Activated CD4-positive, alpha-beta T cell treated with anti-CD3 and anti-CD28 coated beads, Interleukin-2, amount 10 ng/mL, durations not matched to agents 24 days and 14 days (primary cell): ENCODE measurements at regions of chr4 and their contacts with region 1.

Region 1: DNA sequence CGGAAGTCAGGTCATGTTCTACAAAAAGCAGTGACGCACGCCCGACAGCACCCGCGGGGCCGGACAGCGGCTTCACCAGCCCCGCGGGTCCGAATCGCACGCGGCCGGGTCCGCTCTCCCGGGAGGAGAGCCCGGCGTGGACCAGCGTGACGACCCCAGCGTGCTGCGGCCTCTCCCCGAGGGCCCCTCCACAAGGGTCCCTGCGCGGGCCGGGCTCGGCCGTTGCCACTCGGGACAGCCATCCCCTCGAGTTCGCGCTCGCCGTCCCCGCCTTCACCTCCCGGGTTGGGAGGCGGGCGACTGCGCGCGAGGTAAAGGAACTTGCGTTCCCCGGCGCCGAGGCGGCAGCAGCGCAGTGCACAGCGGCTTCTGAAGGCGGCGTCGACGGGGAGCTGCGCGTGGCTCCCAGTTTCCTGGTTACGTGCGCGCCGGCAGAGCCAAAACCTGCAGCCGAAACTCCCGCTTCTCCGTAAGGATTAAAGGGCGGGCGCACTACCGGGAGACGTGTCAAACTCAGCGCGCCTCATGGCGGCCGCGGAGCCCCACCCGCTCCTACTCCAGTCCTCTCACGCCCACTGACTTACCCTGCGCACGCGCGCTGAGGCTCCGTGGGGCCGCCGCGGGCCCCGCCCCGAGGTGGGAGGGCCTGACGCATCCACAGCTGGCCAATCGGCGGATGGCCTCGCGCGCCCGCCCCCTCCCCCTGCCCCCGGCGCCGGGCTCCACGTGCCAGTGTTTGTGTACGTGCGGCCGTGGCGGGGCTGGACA is 416 bp upstream of the LRP2BP start:
- DNase-seq: peak; percentile 100
- H3K4me3 Mint-ChIP-seq: peak overlapping the region; percentile 87
- H3K27ac Mint-ChIP-seq: peak overlapping the region; percentile 96
- H3K4me1 Mint-ChIP-seq: peaks cover 48% of the 10 kb centered on the region
- H3K27me3 Mint-ChIP-seq: no peaks in the 10 kb centered on the region

Region 2: DNA sequence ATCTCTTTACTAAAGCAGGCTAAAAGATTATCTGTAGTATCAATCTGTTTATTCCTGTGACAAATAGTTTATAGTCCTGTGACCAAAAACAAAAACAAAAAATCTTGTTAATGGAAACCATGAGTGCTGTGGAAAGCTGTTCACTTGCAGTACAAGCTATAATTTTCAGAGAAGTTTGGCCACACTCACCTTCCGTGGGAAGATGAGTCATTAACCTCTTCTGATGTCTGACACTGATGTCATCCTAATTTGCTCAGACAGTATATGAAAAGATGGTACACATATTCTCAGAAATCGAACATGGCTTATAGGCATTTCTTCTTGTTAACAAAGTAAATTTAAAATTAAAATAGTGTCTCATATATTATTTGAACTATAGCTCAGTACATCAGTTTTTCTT is 1158.5 kb before region 1 on chr4:
- intact Hi-C with region 1: loop called (anchors 10 kb)
- DNase-seq: peak; percentile 87
- H3K4me3 Mint-ChIP-seq: peak overlapping the region; percentile 68
- H3K27ac Mint-ChIP-seq: peak overlapping the region; percentile 94
- H3K4me1 Mint-ChIP-seq: peaks cover 51% of the 10 kb centered on the region
- H3K27me3 Mint-ChIP-seq: no peaks in the 10 kb centered on the region

Region 3: GRCh38 chr4:185142912-185143595 is 253.1 kb before region 1 on chr4 and contains the start of gene SLC25A4:
- intact Hi-C with region 1: loop called (anchors 5 kb)
- DNase-seq: peak; percentile 89
- H3K4me3 Mint-ChIP-seq: peak within 1 kb of the TSS; percentile 86
- H3K27ac Mint-ChIP-seq: peak within 1 kb of the TSS; percentile 65
- H3K4me1 Mint-ChIP-seq: peaks cover 7% of the 10 kb centered on the region
- H3K27me3 Mint-ChIP-seq: peaks cover 65% of the 10 kb centered on the region
- total RNA-seq, gene SLC25A4: 1.7 and 1.9 TPM in 2 replicates

Region 4: GRCh38 chr4:185209031-185209851 is 186.9 kb before region 1 on chr4 and contains the start of gene SNX25:
- intact Hi-C with region 1: loop called (anchors 1 kb)
- DNase-seq: peak; percentile 97
- H3K4me3 Mint-ChIP-seq: peak within 1 kb of the TSS; percentile 94
- H3K27ac Mint-ChIP-seq: peak within 1 kb of the TSS; percentile 83
- H3K4me1 Mint-ChIP-seq: peaks cover 48% of the 10 kb centered on the region
- H3K27me3 Mint-ChIP-seq: peaks cover 3% of the 10 kb centered on the region
- total RNA-seq, gene SNX25: 27.0 and 27.3 TPM in 2 replicates

Region 5: GRCh38 chr4:185286571-185286970 is 109.6 kb before region 1 on chr4:
- intact Hi-C with region 1: no loop called
- DNase-seq: no peak
- H3K4me3 Mint-ChIP-seq: no peak overlapping the region
- H3K27ac Mint-ChIP-seq: no peak overlapping the region
- H3K4me1 Mint-ChIP-seq: peaks cover 5% of the 10 kb centered on the region
- H3K27me3 Mint-ChIP-seq: no peaks in the 10 kb centered on the region

Region 6: DNA sequence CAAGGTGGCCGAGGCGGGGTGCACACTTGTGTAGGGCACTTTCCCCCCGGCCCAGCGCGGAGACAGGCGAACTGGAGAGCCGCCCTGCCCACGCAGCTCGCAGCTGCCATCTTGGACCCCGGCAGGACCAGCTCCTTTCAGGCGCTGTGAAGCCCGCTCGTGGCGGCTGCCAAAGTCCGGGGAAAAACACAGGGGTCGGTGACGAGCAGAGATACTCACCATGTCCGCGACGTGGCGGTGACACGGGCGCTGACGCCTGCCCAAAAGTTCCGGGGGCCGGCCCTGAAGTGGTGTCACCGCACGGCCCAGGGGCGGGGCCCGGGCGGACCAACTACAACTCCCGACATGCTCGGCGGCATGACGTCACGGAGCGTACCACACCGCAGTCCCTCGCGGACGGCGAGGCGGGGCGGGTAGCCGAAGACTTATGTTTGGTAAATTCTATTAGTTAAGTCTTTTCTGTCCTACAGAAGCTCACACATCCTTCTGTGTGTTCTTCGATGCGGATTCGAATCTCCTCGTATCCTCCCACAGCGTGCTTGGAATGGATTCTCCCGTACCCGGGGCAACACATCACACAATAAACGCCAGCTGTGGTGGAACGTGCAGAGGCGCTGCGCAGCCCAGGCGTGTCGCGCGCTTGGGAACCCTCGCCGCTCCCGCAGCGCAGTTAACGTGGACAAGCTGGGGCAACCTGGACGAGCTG is 29.7 kb after region 1 on chr4 and contains the start of gene UFSP2:
- intact Hi-C with region 1: loop called (anchors 1 kb)
- DNase-seq: peak; percentile 97
- H3K4me3 Mint-ChIP-seq: peak within 1 kb of the TSS; percentile 87
- H3K27ac Mint-ChIP-seq: peak within 1 kb of the TSS; percentile 98
- H3K4me1 Mint-ChIP-seq: peaks cover 24% of the 10 kb centered on the region
- H3K27me3 Mint-ChIP-seq: peaks cover 14% of the 10 kb centered on the region
- total RNA-seq, gene UFSP2: 24.8 and 25.7 TPM in 2 replicates

Region 7: GRCh38 chr4:185716577-185717376 is 320.6 kb after region 1 on chr4:
- intact Hi-C with region 1: no loop called
- DNase-seq: no peak
- H3K4me3 Mint-ChIP-seq: no peak overlapping the region
- H3K27ac Mint-ChIP-seq: no peak overlapping the region
- H3K4me1 Mint-ChIP-seq: no peaks in the 10 kb centered on the region
- H3K27me3 Mint-ChIP-seq: no peaks in the 10 kb centered on the region